ENCODE measurements at regions of chr20 and their contacts with region 1.

Region 1: GRCh38 chr20:41339507-41340326 is 904 bp upstream of the LPIN3 start:
- DNase-seq: peak; percentile 92
- ATAC-seq: peak; percentile 78

Region 2: DNA sequence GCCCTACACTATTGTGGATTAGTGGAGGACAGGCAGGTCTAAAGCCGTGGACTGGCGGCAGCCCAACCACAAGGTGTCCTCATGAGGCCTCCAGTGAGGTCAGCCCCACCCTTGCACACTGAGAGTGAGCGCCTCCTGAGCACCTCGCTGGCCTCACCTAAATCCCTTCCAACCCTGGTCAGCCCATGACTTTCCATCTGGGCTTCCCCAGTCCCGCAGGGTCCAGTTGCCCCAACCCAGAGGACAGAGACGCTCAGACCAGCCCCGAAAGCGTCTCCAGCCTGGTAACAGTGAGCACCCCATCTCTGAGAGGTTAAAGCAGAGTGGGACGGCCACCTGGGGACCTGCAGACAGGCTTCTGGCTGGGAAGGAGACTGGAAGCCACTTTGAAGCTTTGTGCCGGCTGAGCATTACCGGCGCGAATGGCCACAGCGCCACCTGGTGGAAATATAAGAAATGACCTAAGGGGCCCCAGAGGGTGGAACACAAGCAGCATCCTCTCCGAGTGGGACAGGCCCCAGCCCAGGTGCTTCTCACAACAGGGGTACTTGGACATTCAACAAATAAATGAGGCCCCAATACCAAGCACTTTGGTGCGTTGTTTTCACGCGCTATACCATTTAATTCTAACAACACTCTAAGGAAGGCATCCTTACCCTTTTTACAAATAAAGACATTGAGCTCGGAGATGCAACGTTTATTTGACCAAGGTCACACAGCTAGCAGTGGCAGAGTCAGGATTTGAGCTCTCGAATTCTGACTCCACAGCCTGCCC is 376.8 kb before region 1 on chr20:
- intact Hi-C with region 1: loop called (anchors 10 kb)
- DNase-seq: peak; percentile 84
- ATAC-seq: peak; percentile 85

Region 3: DNA sequence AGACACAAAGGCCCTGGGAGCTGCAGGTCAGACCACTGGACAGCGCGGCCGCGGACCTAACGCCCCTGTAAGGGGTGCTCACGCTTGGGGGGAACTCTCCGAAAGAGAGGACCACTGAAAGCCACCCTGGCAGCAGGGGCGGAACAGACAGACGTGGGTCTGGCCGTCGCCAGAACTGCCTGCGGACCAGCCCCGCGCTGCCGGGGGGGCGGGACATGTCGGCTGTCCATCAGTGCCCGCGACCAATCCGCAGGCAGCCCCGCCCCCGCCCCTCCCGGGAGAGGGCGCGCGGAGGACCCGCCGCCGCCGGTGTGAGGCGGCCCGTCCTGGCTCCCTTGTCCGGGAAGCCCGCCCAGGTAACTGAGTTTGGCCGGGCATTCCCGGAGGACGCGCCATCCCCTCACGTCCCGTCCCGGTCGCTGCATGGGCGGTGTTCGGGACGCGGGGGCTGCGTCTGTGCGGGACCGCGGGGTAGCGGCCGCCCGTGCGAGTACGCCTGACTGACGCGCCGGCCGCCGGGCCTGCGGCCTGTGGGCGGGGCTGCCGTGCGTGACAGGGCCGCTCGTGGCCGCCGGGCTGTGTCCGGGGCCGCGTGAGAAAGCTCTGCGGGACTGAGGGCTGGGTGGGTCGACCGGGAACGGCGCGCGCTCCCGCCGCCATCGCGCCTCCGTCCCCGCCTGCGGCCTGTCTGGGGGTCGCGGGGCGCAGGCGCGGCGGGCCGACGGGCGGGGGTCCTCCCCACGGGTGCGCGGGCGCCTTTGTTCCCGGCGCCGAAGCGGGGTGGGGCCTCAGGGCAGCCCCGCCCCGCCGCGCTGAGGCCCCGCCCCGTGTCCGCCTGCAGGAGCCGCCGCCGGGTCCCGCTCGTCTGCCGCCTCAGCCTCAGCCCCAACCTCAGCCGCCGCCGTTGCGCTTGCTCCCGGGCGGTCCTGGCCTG is 202.8 kb before region 1 on chr20 and contains the start of gene PLCG1:
- intact Hi-C with region 1: loop called (anchors 1 kb)
- DNase-seq: peak; percentile 94
- ATAC-seq: peak; percentile 92
- total RNA-seq, gene PLCG1: 43.4 TPM

Region 4: DNA sequence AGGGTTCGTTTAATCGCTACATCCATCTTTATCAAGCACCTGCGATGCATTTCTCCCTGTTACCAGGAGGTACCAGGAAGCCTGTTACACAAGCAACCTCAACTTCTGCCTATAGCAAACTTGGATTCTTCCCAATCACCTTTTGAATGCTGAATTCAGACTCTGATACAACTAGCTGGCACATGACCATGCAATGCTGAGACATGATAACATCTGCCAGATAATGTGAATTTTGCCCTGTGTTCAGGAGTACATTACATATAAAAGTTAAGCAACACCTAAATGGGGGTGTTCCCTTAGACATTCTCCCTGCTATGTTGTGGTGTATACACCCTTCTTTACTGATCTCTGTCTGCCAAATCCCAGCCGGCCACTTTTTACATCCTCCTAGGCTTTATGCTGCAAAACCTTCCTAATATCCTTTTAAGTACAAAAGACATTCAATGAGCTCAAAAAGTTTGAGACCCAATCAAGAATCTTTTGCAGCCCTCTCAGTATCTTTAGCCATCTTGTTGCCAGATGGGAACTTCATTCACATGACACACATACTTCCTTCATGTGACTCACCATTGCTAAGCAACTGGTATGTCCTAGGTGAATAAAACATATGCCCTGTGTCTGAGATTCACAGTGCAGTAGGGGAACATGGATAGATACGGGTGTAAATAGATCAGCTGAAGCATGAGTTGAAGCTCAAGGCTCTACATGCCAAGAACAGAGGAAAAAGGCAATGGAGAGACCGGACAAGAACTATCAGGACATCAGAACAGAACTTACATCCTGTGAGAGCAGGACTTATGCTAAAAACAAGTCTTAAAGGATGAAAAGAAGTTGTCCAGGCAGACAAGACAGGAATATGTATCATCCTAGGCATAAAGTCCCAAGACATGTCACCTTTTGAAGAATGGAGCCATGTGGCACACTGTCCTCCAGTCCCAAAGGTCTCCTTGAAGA is 106.5 kb before region 1 on chr20:
- intact Hi-C with region 1: loop called (anchors 5 kb)
- DNase-seq: no peak
- ATAC-seq: peak; percentile 30

Region 5: DNA sequence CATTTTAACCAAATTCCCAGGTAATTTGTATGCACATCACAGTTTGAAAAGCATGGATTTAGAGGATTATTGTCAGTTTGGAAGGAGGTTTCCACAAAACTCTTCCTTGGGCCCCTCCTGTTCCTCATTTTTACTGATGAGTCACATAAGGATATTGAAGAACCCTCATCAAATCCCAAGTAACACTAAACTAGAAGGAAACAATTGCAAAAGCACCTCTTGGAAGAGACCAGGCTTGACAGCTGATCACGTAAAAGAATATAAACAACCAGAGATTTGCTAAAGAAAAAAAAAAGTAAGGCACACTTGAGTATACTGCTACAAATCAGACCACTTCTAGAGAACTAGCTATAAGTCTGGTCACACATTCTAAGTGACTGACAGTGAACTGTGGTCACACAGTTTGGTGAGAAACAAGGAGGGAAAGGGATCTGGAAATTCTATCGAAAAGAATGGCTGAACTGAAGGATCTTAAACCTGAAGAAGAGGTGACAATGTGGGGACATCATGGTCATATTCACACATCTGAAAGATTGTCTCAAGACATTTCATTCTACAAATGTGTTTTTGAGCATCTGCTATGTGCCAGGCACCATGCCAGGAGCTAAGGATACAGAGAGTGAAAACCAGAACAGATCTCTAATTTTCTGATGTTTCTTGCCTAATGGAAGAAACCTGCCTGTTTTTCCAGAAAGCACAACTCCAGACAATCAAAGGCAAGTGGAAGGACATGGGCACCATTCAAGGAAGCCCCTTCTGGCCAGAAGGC is 46.3 kb before region 1 on chr20:
- intact Hi-C with region 1: no loop called
- DNase-seq: no peak
- ATAC-seq: no peak

Region 6: DNA sequence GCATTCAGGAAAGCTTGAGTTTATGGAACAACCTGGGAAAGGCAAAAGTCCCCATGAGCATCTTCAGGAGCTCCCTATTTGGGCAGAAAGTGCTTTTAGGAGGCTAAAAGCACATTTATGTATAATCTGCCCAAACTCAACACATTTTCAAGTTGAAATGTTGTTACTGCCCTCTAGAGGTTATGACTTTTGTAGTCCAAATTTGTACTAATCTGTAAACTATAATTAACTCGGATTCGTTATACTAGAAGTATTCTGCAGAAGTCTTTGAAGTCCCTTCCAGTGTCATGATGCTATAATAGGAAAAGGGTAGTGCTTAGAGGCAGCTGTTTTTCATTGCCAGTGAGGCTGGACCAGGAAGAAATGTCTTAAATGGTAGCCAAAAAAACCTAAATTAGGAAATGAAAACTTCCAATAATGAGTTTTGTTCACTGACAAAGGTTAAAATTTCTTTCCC is 71.7 kb after region 1 on chr20:
- intact Hi-C with region 1: loop called (anchors 2 kb)
- DNase-seq: no peak
- ATAC-seq: peak; percentile 68

Region 7: GRCh38 chr20:41693136-41693979 is 353.6 kb after region 1 on chr20:
- intact Hi-C with region 1: loop called (anchors 5 kb)
- DNase-seq: peak; percentile 87
- ATAC-seq: peak; percentile 96

Measured in Right ventricle myocardium inferior (tissue), 1 donor.